ENCODE measurements at regions of chr20 and their contacts with region 1.

Region 1: DNA sequence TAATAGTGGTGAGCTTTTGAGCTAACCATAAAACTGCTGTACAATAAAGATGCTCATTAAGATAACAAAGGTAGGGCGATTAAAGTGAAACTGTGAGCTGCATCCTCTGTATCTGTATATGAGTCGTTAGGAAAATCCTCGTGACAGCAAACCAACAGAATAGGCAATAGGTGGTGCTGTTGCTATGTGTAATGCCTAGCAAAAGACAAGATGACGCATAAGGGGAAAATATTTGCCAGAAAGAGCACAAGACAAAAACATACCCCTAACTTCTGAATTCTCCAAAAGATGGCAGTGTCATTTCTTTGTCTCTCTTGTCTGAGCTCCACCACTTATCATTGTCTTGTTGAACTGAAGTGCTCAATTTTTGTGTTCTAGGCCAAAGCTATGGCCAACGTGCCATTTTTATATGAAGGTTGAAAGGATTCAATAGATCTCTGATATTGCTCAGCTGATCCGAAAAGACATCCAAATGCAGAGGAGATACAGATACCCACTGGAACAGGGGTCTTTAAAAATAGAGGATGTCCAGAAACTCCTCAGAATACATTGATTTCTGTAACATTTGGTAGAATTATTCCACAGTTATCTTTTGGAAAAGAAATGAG is 56.3 kb upstream of the ANKEF1 start:
- DNase-seq: peak; percentile 91
- H3K4me3 ChIP-seq: no peak overlapping the region
- H3K27ac ChIP-seq: no peak overlapping the region
- H3K4me1 ChIP-seq: peaks cover 9% of the 10 kb centered on the region
- H3K27me3 ChIP-seq: no peaks in the 10 kb centered on the region
- CTCF ChIP-seq: peak; percentile 93

Region 2: DNA sequence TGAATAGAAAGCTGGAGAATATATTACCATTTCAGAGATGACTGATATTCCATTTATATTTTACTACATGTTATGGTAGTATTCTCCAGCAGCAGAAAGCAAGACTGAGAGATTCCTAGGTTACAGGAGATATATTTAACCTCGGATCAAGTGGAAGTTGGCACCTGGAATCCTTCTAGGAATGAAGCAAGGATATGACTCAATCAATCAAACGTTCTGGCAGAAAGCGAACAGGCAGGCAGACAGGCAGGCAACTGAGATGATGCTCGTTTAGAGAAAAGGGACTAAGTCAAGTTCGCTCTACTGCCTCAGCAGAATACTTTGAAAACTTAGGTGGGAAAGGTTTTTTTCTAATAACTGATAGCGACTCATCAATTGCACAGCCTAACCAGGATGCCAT is 185.8 kb before region 1 on chr20:
- CTCF ChIA-PET with region 1: no interaction called
- POLR2A ChIA-PET with region 1: no interaction called
- intact Hi-C with region 1: no loop called
- DNase-seq: no peak
- H3K4me3 ChIP-seq: no peak overlapping the region
- H3K27ac ChIP-seq: no peak overlapping the region
- H3K4me1 ChIP-seq: no peaks in the 10 kb centered on the region
- H3K27me3 ChIP-seq: peaks cover 40% of the 10 kb centered on the region
- CTCF ChIP-seq: no peak

Region 3: DNA sequence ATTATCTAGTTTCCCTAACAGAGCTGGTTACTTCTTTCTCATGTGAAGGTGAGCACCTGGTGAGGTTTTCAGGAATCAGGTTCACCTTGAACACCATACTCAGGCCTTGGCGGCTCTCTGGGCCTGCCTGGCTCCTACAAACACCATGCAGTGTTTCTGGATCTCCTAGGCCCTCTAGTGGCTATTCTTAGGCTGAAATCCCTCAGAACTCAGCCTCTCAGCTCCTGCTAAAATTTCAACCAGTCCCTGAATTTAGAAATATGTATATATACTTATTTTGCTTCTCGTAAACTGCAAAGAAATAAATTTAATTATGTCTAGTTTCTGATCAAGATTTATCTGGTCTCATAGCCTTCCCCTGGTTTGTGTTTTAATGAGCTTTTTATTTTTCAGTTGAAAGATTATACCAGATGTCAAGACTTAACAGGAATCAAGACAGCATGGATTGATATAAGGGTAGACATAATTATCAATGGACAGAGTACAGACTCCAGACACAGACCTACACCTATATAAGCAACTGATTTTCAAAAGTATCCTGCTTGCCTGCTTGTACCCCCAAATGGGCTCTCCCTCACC is 112.2 kb after region 1 on chr20:
- CTCF ChIA-PET with region 1: interaction called, 45 read pairs
- POLR2A ChIA-PET with region 1: no interaction called
- intact Hi-C with region 1: loop called (anchors 1 kb)
- DNase-seq: peak; percentile 66
- H3K4me3 ChIP-seq: no peak overlapping the region
- H3K27ac ChIP-seq: no peak overlapping the region
- H3K4me1 ChIP-seq: no peaks in the 10 kb centered on the region
- H3K27me3 ChIP-seq: no peaks in the 10 kb centered on the region
- CTCF ChIP-seq: peak; percentile 79

Region 4: DNA sequence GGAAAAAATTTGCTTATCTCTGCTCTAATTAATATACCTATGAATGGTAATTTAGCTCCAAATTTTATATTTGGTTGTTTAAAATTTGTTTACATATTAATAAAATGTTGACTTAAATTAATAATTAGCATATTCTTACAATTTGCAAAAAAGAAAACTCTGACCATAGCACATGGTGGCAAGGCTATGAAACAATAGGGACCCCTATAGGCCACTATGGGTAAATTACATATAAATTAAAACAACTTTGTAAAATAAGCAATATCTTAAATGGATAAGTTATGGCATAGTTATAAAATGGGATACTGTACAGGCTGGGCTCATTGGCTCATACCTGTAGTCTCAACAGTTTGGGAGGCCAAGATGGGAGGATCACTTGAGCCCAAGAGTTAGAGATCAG is 379.5 kb after region 1 on chr20:
- CTCF ChIA-PET with region 1: no interaction called
- POLR2A ChIA-PET with region 1: no interaction called
- intact Hi-C with region 1: loop called (anchors 2 kb)
- DNase-seq: peak; percentile 28
- H3K4me3 ChIP-seq: no peak overlapping the region
- H3K27ac ChIP-seq: no peak overlapping the region
- H3K4me1 ChIP-seq: peaks cover 8% of the 10 kb centered on the region
- H3K27me3 ChIP-seq: no peaks in the 10 kb centered on the region
- CTCF ChIP-seq: peak; percentile 73

Region 5: GRCh38 chr20:10536531-10536930 is 558.0 kb after region 1 on chr20:
- CTCF ChIA-PET with region 1: no interaction called
- POLR2A ChIA-PET with region 1: no interaction called
- intact Hi-C with region 1: loop called (anchors 5 kb)
- DNase-seq: no peak
- H3K4me3 ChIP-seq: no peak overlapping the region
- H3K27ac ChIP-seq: peak overlapping the region; percentile 48
- H3K4me1 ChIP-seq: peaks cover 47% of the 10 kb centered on the region
- H3K27me3 ChIP-seq: no peaks in the 10 kb centered on the region
- CTCF ChIP-seq: peak; percentile 65

Region 6: GRCh38 chr20:11274141-11274594 is 1295.7 kb after region 1 on chr20:
- CTCF ChIA-PET with region 1: no interaction called
- POLR2A ChIA-PET with region 1: no interaction called
- intact Hi-C with region 1: loop called (anchors 5 kb)
- DNase-seq: peak; percentile 82
- H3K4me3 ChIP-seq: no peak overlapping the region
- H3K27ac ChIP-seq: no peak overlapping the region
- H3K4me1 ChIP-seq: peaks cover 35% of the 10 kb centered on the region
- H3K27me3 ChIP-seq: no peaks in the 10 kb centered on the region
- CTCF ChIP-seq: peak; percentile 81

Measured in A673 (cell line).